Heart right ventricle (tissue), 16 donors: ENCODE measurements at regions of chr5 and their contacts with region 1.

Region 1: DNA sequence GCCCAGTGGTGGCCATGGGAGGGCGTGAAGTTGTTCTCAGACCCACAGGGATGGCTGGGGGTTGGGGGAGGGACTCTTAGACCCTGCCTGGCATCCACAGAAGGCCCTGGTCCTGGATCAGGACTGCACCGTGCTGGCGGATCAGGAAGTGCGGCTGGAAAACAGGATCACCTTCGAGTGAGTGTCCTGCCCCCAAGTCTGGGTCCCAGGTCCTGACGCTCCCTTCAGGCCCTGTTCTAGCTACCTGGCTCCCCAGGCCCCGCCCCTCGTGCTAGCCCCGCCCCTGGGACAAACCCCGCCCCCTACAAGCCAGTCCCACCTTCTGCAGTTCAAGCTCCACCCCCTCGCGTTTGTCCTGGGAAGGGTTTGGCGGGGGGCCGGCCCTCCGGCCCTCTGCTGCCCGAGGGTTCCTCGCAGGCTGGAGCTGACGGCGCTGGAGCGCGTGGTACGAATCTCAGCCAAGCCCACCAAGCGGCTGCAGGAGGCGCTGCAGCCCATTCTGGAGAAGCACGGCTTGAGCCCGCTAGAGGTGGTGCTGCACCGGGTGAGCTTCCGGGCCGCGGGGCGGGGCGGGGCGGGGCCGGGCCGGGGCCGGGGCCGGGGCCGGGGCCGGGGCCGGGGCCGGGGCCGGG is 12.9 kb downstream of the RGS14 start:
- DNase-seq: peak; percentile 66 to 72
- ATAC-seq: peak; percentile 42 to 65 (median 58)
- H3K4me3 ChIP-seq: peak overlapping the region in 9 of 10 donors; percentile 14 to 58 (median 41)
- H3K27ac ChIP-seq: peak overlapping the region in 2 of 10 donors; percentile 31 to 75
- H3K4me1 ChIP-seq: peaks cover 3 to 59% (median 18%) of the 10 kb centered on the region in 9 donors
- H3K27me3 ChIP-seq: no peaks in the 10 kb centered on the region
- CTCF ChIP-seq: peak in 8 of 9 donors; percentile 11 to 60 (median 44)

Region 2: DNA sequence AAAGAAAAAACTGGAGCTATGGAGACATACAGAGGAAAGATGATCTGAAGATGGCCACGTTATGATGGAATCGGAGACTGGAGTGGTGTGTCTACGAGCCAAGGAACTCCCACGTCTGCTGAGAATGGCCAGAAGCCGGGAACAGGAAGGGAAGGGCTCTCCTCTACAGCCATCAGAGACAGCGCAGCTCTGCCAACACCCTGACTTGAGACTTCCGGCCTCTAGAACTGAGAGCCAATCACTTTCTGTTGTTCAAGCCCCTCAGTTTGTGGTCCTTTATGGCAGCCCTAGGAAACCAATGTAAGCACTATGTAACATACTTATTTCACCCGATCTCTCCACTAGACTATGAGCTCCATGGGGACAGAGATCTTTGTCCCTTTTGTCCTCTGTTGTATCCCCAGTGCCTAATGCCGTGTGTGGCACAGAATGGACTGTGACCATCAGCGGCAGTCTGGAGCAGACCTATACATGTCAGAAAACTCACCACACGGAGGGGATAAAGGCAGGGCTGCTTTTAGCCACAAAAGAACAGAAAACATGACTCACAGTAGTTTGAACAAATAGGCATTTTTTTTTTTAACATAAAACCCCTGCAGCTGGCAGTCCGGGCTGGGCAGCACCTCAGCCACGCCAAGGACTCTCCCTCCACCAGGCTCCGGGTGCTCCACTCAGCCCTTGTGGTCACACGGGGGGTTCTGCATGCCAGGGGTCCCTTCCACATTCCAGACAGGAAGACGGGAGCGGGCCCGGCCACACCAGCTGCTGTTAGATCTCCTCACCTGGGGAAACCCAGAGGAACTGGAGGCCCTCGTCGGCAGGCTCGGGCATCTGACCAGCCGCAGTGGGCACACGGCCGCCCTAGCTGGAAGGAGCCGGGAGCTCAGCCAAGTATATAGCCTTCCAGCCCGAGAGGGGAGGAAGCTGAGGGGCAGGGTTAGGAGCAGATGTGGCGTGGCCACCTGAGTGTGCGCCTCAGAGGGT is 42.8 kb before region 1 on chr5:
- intact Hi-C with region 1: loop called in 2 of 10 experiments (anchors 5 to 10 kb)
- DNase-seq: peak in 1 of 2 donors; percentile 62
- ATAC-seq: peak; percentile 72 to 96 (median 89)
- H3K4me3 ChIP-seq: no peak overlapping the region
- H3K27ac ChIP-seq: peak overlapping the region in 9 of 10 donors; percentile 38 to 74 (median 62)
- H3K4me1 ChIP-seq: peaks cover 0 to 16% (median 11%) of the 10 kb centered on the region in 9 donors
- H3K27me3 ChIP-seq: no peaks in the 10 kb centered on the region
- CTCF ChIP-seq: no peak